ENCODE measurements at regions of chr11 and their contacts with region 1.

Region 1: GRCh38 chr11:62671575-62672389 is at the starts of genes LBHD1 and UQCC3:
- DNase-seq: peak; percentile 86 to 92
- ATAC-seq: peak; percentile 81 to 86
- H3K4me3 ChIP-seq: peak within 1 kb of the TSS; percentile 90
- H3K27ac ChIP-seq: peak within 1 kb of the TSS; percentile 97 to 98
- H3K4me1 ChIP-seq: peaks cover 31% of the 10 kb centered on the region
- CTCF ChIP-seq: no peak
- EP300 ChIP-seq: no peak
- POLR2A ChIP-seq: peak; percentile 72
- RAD21 ChIP-seq: no peak
- polyA plus RNA-seq, gene LBHD1: 4.1 and 5.3 TPM in 2 replicates
- polyA plus RNA-seq, gene UQCC3: 13.9 and 20.2 TPM in 2 replicates

Region 2: DNA sequence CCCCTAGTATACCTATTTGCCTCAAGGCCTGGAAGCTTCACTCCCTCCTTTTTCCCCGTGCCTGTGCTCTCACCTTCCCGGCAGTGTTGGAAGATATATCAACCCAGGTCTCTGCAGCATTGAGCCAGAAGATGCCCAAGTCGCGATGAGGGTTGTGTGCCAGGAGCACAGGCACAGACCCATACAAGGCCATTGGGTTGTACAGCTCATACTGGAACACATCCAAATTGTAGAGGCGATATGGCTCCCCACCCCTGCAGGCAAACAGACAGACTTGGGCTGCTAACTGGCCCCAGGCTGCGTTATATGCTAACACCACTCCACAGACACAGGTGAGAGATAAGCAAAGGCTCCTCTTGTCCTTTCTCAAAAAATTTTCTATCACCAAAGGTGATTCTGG is 39.3 kb before region 1 on chr11:
- CTCF ChIA-PET with region 1: no interaction called
- POLR2A ChIA-PET with region 1: no interaction called
- DNase-seq: no peak
- ATAC-seq: no peak
- H3K4me3 ChIP-seq: no peak overlapping the region
- H3K27ac ChIP-seq: no peak overlapping the region
- H3K4me1 ChIP-seq: no peaks in the 10 kb centered on the region
- CTCF ChIP-seq: no peak
- EP300 ChIP-seq: no peak
- POLR2A ChIP-seq: no peak
- RAD21 ChIP-seq: no peak

Region 3: GRCh38 chr11:62645956-62646824 is 25.6 kb before region 1 on chr11 and contains the start of gene GANAB:
- CTCF ChIA-PET with region 1: no interaction called
- POLR2A ChIA-PET with region 1: interaction called, 13 read pairs
- DNase-seq: peak; percentile 97 to 99
- ATAC-seq: peak; percentile 97 to 99
- H3K4me3 ChIP-seq: peak within 1 kb of the TSS; percentile 79
- H3K27ac ChIP-seq: peak within 1 kb of the TSS; percentile 94 to 97
- H3K4me1 ChIP-seq: peaks cover 11% of the 10 kb centered on the region
- CTCF ChIP-seq: no peak
- EP300 ChIP-seq: no peak
- POLR2A ChIP-seq: peak; percentile 89
- RAD21 ChIP-seq: no peak
- polyA plus RNA-seq, gene GANAB: 215 and 308 TPM in 2 replicates

Region 4: GRCh38 chr11:62652161-62653006 is 19.4 kb before region 1 on chr11:
- CTCF ChIA-PET with region 1: interaction called, 8 read pairs
- POLR2A ChIA-PET with region 1: interaction called, 91 read pairs
- DNase-seq: no peak
- ATAC-seq: peak in 1 of 2 experiments; percentile 60; a peak in 3 of 6 replicates
- H3K4me3 ChIP-seq: peak overlapping the region; percentile 75
- H3K27ac ChIP-seq: peak overlapping the region; percentile 85 to 97
- H3K4me1 ChIP-seq: peaks cover 10% of the 10 kb centered on the region; the same call in 2 of the 3 replicates
- CTCF ChIP-seq: no peak
- EP300 ChIP-seq: no peak
- POLR2A ChIP-seq: no peak
- RAD21 ChIP-seq: no peak

Measured in A549 (cell line).